ENCODE measurements at regions of chr1 and their contacts with region 1.

Region 1: DNA sequence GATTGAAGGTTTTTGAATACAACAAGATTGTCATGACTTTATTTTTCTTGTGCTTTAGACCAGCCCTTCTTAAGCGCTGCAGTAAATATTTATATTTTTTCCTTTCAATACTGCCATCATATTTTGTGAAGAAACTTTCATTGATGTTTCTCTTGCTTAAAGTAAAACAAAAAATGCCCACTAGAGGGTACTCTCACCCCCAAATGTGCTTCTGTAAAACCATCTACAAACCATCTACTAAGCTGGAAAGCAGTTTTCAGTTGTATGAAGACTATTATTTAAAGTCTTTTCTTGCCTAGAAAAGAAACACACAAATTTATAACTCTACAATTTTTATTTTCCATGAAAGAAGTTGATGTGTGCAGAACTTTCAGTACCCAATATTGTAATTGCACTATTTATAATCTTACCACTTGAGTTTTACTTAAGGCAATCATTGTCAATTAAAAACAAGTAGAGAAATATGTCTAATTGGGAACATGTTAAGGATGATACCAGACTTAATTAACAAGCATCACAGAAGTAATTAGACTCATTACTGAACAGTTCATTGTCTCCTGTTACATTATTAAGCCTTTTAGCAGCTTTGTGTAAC is 10.7 kb downstream of the LEPR start:
- DNase-seq: no peak
- ATAC-seq: no peak

Region 2: DNA sequence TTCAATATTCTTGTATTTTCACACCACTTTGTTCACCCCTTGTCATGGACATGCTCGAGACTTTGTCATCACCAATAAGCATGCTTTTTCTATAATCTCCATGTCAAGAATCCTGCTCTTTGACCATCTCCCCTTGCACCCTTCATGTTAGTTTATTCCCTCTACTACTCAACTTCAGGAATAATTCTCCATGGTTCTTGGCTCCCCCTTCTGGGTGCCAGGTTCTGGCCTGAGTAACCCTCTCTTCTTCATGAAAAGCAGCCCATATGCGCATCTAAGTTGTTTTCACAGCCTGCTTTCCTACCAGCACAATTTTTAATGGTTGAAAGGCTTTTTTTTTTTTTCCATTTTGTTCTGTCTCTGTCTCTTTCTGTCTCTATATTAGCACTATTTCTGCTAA is 149.9 kb after region 1 on chr1:
- intact Hi-C with region 1: loop called (anchors 5 kb)
- DNase-seq: no peak
- ATAC-seq: no peak

Region 3: GRCh38 chr1:65687428-65688214 is 256.4 kb after region 1 on chr1:
- intact Hi-C with region 1: loop called (anchors 5 kb)
- DNase-seq: peak; percentile 88
- ATAC-seq: peak; percentile 76